Activated T-helper 1 cell treated with anti-CD3 and anti-CD28 coated beads, Interleukin-12 subunit alpha, Interleukin-12 subunit beta, Interleukin-2, Interleukin-4 antibody, amounts not matched to agents 30 ng/mL and 10 ng/mL and 1 ng/mL, durations not matched to agents 14 hours and 24 hours and 36 hours (primary cell): ENCODE measurements at regions of chr22 and their contacts with region 1.

Region 1: GRCh38 chr22:26672590-26673468 is 15.4 kb downstream of the MIAT start:
- DNase-seq: peak; percentile 91
- H3K4me3 Mint-ChIP-seq: peak overlapping the region; percentile 95
- H3K27ac Mint-ChIP-seq: peak overlapping the region; percentile 98
- H3K4me1 Mint-ChIP-seq: peaks cover 72% of the 10 kb centered on the region
- H3K27me3 Mint-ChIP-seq: no peaks in the 10 kb centered on the region

Region 2: DNA sequence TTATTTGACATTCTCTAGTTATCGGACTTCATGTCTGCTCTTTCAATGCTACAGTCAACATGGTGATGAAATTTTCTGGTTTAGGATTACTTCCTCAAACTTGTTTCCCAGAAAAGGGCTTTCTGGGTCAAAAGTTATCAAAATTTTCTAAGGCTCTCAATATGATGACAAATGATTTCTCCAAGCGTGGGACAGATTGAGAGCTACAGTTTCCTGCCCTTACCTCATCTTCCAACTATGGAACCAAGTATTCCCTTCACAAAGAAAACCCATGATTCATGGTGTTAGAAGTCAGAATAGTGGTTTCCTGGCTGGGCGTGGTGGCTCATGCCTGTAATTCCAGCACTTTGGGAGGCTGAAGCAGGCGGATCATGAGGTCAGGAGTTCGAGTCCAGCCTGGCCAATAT is 913.0 kb before region 1 on chr22:
- intact Hi-C with region 1: loop called (anchors 10 kb)
- DNase-seq: no peak
- H3K4me3 Mint-ChIP-seq: no peak overlapping the region
- H3K27ac Mint-ChIP-seq: no peak overlapping the region
- H3K4me1 Mint-ChIP-seq: peaks cover 28% of the 10 kb centered on the region
- H3K27me3 Mint-ChIP-seq: no peaks in the 10 kb centered on the region

Region 3: DNA sequence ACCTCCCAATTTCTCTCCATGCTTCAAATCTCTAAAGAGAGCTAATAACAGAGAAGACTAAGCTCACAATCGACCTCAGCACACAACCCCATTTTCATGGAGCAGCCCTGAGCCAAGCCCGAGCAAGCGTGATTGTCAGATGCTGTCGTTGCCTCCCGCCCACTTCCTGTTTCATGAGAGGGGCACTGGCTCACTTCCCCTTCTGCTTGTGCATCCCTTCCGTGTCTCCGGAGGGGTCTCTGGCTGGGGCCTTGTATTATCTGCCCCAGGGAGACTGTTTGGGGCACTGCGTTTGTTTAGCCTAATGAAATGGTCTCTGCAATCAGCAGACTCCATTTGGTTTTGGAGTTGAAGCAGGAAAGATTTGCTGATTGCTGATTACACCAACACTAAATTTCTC is 684.9 kb before region 1 on chr22:
- intact Hi-C with region 1: no loop called
- DNase-seq: no peak
- H3K4me3 Mint-ChIP-seq: no peak overlapping the region
- H3K27ac Mint-ChIP-seq: no peak overlapping the region
- H3K4me1 Mint-ChIP-seq: no peaks in the 10 kb centered on the region
- H3K27me3 Mint-ChIP-seq: peaks cover 5% of the 10 kb centered on the region

Region 4: GRCh38 chr22:26215736-26216135 is 457.1 kb before region 1 on chr22:
- intact Hi-C with region 1: no loop called
- DNase-seq: no peak
- H3K4me3 Mint-ChIP-seq: no peak overlapping the region
- H3K27ac Mint-ChIP-seq: no peak overlapping the region
- H3K4me1 Mint-ChIP-seq: no peaks in the 10 kb centered on the region
- H3K27me3 Mint-ChIP-seq: peaks cover 4% of the 10 kb centered on the region

Region 5: GRCh38 chr22:26428515-26429457 is 244.0 kb before region 1 on chr22 and contains the start of gene ASPHD2:
- intact Hi-C with region 1: loop called (anchors 1 kb)
- DNase-seq: peak; percentile 77
- H3K4me3 Mint-ChIP-seq: peak within 1 kb of the TSS; percentile 97
- H3K27ac Mint-ChIP-seq: peak within 1 kb of the TSS; percentile 97
- H3K4me1 Mint-ChIP-seq: peaks cover 54% of the 10 kb centered on the region
- H3K27me3 Mint-ChIP-seq: peaks cover 21% of the 10 kb centered on the region
- total RNA-seq, gene ASPHD2: 23.4 and 23.5 TPM in 2 replicates

Region 6: DNA sequence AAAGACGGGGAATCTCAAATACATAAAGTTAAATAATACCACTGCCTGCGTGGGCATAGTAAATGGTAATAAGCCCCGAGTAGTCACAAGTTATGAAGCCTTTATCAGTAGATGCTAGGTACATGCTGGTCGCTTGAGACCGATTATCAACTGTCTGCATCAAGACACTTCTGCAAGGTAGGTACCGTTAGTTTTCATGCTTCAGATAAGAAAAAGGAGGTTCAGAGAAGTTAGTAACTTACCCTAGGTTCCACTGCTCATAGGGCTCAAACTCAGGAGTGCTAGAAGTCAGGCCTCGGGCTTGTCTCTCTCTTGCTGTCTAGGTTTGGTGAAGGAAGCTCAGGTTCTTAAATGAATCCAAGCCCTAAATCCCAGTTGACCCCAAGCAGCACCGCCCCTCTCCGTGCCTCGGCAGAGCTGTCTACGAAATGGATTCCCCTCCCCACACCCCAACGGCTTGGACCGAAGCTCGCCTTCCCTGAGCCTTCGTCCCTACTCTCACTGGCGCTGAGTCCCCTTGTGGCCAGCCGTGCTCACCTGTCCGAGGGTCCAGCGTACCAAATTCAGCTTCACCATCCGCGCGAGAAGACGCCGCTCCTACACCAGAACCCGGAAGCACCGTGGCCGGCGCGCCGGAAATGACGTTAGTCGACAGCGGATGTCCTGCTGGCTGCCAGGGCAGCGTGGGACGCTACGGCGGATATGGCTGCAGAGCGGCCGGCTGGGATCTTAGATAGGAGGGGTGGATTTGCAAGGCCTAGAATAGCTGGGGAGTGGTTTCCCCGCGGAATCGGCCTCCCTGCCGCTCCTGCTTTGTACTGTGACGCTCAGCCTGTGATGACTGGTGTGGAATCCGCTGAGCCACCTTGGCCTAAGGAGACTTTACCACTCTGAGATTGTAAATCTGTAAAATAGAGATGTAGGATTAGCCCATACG is 160.7 kb before region 1 on chr22 and contains the start of gene TFIP11:
- intact Hi-C with region 1: loop called (anchors 1 kb)
- DNase-seq: peak; percentile 91
- H3K4me3 Mint-ChIP-seq: peak within 1 kb of the TSS; percentile 100
- H3K27ac Mint-ChIP-seq: peak within 1 kb of the TSS; percentile 96
- H3K4me1 Mint-ChIP-seq: peaks cover 50% of the 10 kb centered on the region
- H3K27me3 Mint-ChIP-seq: no peaks in the 10 kb centered on the region
- total RNA-seq, gene TFIP11: 57.2 and 58.1 TPM in 2 replicates

Region 7: DNA sequence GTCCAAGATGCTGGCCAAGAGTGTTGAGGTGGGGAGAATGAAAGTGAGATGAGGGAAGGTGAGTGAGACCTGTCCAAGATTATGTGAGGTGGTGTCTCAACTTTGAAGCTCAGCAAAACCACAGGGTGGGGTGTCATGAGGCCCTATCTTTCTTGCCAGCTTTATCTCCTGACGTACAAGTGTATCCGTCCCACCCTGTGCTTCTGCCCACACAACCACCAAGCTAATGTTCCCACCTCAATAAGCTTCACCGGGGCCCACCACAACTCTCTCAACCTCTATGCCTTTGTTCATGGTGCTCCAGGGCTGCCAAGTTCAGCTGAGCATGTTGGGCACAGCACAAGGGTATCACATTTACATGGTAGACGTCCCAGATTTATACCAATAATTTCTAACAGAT is 75.8 kb before region 1 on chr22:
- intact Hi-C with region 1: no loop called
- DNase-seq: no peak
- H3K4me3 Mint-ChIP-seq: no peak overlapping the region
- H3K27ac Mint-ChIP-seq: no peak overlapping the region
- H3K4me1 Mint-ChIP-seq: peaks cover 35% of the 10 kb centered on the region
- H3K27me3 Mint-ChIP-seq: peaks cover 10% of the 10 kb centered on the region

Region 8: DNA sequence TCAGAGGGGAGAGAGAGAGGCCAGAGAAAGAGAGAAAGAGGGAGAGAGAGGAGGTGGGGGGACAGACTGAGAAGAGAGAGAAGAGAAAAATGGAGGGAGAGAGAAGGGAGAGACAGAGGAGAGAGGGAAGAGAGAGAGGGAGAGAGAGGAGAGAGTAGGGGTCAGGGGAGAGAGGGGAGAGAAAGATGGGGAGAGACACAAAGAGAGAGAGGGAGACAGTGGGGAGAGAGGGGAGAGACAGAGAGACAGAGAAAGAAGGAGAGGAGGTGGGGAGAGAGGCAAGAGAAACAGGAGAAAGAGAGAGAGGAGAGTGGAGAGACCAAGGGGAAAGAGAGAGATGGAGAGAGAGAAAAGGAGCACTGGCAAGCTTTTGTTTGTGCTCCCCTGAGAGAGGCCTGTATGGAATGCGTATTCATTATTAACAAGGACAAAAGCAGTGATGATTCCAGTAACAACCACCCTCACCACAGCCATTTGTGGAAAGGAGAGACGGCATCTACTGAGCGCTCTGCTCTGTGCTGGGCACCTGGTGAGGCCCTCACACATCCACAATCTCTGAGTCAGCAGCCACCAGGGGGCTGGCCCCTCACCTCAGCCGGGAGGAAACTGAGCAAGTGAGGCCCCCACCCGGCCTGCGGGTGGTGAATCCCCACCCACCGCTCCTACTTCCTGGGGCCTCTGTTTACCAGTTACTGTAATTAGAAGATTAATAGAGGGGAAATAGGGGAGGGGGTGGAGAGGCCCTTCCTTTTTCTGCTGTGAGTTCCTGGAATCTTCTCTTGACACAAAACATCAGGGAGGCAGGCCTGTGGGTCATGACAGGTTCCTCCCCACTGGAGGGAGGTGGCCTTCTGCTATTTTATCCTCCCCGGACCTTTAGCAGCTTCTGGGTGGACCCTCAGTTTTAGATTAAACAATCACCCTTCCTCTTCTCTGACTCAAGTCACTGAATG is 30.1 kb before region 1 on chr22:
- intact Hi-C with region 1: loop called (anchors 1 kb)
- DNase-seq: peak; percentile 75
- H3K4me3 Mint-ChIP-seq: peak overlapping the region; percentile 79
- H3K27ac Mint-ChIP-seq: peak overlapping the region; percentile 99
- H3K4me1 Mint-ChIP-seq: peaks cover 81% of the 10 kb centered on the region
- H3K27me3 Mint-ChIP-seq: no peaks in the 10 kb centered on the region

Region 9: DNA sequence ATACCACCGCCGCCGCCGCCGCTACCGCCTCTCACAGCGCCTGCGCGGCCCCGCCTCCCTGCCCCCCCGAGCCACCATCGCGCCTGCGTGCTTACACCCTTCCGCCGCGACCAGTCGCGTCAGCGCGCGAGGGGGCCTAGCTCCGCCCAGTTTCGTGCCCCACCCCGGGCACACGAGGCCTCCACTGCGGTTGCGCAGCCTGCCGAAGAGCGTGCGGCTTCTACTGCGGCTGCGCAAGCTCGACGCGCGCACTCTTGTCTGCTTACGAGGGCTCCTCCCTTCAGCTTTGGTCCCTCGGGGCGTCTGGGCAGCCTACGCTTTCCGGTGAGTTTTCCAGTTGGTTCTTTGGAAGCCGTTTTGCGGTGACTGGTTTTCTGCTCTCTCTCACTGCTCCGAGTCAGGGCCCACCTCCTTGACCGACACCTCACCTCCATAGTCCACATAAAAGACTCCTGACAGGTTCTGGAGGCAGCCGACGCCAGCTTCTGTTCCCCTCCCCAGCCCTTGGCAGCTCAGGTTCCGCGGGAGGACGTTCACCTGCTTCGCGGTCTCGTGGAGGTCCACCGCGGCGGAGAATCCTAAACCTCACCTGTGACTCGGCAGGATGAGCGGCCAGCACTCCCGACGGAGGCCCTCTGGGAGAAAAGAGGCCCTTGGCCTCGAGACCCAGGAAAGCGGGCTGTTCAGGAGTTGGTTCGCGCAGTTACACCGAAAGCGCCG is 1246.6 kb after region 1 on chr22 and contains the start of gene PITPNB:
- intact Hi-C with region 1: loop called (anchors 1 kb)
- DNase-seq: peak; percentile 98
- H3K4me3 Mint-ChIP-seq: peak within 1 kb of the TSS; percentile 99
- H3K27ac Mint-ChIP-seq: peak within 1 kb of the TSS; percentile 100
- H3K4me1 Mint-ChIP-seq: peaks cover 65% of the 10 kb centered on the region
- H3K27me3 Mint-ChIP-seq: peaks cover 5% of the 10 kb centered on the region
- total RNA-seq, gene PITPNB: 153 and 154 TPM in 2 replicates